ENCODE measurements at regions of chr18 and their contacts with region 1.

Region 1: DNA sequence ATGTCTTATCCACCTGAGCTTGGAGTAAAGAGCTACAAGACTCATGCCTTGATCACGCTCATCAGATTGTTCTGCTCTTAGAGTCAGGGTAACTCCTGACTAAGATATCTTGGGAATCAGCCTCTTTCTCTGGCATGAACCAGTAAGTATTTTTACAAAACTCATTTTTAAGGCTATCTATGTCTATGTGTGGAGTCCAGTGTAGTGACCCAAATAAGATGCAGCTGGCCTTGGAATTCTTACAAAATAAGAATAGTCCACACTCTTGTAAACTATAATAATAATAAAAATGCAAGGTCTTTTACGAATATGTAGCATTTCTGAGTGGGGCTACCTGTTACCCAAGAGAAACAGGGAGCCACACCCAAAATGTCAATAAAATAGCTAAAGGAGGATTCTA is 498.3 kb upstream of the SYT4 start:
- DNase-seq: no peak
- H3K4me3 ChIP-seq: no peak overlapping the region
- H3K27ac ChIP-seq: no peak overlapping the region
- H3K4me1 ChIP-seq: peaks cover 3% of the 10 kb centered on the region
- H3K27me3 ChIP-seq: no peaks in the 10 kb centered on the region
- CTCF ChIP-seq: no peak
- POLR2A ChIP-seq: no peak

Region 2: DNA sequence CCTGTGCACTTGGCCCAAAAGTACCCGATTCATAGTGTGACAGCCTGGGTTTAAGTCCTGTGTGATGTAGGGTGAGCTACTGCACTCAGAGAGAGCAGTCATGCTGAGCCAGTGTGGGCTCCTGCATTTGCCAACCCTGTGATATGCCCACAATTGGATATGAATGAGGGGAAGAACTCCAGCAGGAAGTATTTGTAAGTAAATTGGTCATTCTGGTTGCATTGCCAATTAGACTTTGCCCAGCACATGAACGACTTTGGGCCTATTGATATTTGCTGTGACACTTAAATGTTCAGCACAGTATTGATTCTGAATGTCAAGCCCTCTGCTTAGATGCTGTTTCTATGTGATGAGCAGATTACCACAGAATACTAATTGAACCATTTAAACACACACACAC is 1249.7 kb before region 1 on chr18:
- intact Hi-C with region 1: no loop called
- DNase-seq: no peak
- H3K4me3 ChIP-seq: no peak overlapping the region
- H3K27ac ChIP-seq: no peak overlapping the region
- H3K4me1 ChIP-seq: no peaks in the 10 kb centered on the region
- H3K27me3 ChIP-seq: no peaks in the 10 kb centered on the region
- CTCF ChIP-seq: no peak
- POLR2A ChIP-seq: no peak

Region 3: GRCh38 chr18:43751203-43751602 is 24.4 kb before region 1 on chr18:
- intact Hi-C with region 1: loop called (anchors 1 kb)
- DNase-seq: no peak
- H3K4me3 ChIP-seq: no peak overlapping the region
- H3K27ac ChIP-seq: no peak overlapping the region
- H3K4me1 ChIP-seq: no peaks in the 10 kb centered on the region
- H3K27me3 ChIP-seq: no peaks in the 10 kb centered on the region
- CTCF ChIP-seq: no peak
- POLR2A ChIP-seq: no peak